ENCODE measurements at regions of chrX and their contacts with region 1.

Region 1: GRCh38 chrX:72271091-72271490 is 6.0 kb downstream of the RPS4X start:
- DNase-seq: no peak
- ATAC-seq: no peak
- H3K4me3 ChIP-seq: no peak overlapping the region
- H3K27ac ChIP-seq: no peak overlapping the region
- H3K4me1 ChIP-seq: peaks cover 38% of the 10 kb centered on the region
- H3K27me3 ChIP-seq: no peaks in the 10 kb centered on the region
- CTCF ChIP-seq: no peak

Region 2: GRCh38 chrX:72216973-72217372 is 54.1 kb before region 1 on chrX:
- CTCF ChIA-PET with region 1: no interaction called
- POLR2A ChIA-PET with region 1: no interaction called
- in situ Hi-C with region 1: no loop called
- intact Hi-C with region 1: no loop called
- DNase-seq: no peak
- ATAC-seq: no peak
- H3K4me3 ChIP-seq: no peak overlapping the region
- H3K27ac ChIP-seq: no peak overlapping the region
- H3K4me1 ChIP-seq: no peaks in the 10 kb centered on the region
- H3K27me3 ChIP-seq: no peaks in the 10 kb centered on the region
- CTCF ChIP-seq: no peak

Region 3: GRCh38 chrX:72294497-72294896 is 23.4 kb after region 1 on chrX:
- CTCF ChIA-PET with region 1: no interaction called
- POLR2A ChIA-PET with region 1: no interaction called
- in situ Hi-C with region 1: no loop called
- intact Hi-C with region 1: no loop called
- DNase-seq: no peak
- ATAC-seq: no peak
- H3K4me3 ChIP-seq: no peak overlapping the region
- H3K27ac ChIP-seq: no peak overlapping the region
- H3K4me1 ChIP-seq: no peaks in the 10 kb centered on the region
- H3K27me3 ChIP-seq: no peaks in the 10 kb centered on the region
- CTCF ChIP-seq: peak; percentile 14; the same call in 1 of the 2 replicates

Region 4: DNA sequence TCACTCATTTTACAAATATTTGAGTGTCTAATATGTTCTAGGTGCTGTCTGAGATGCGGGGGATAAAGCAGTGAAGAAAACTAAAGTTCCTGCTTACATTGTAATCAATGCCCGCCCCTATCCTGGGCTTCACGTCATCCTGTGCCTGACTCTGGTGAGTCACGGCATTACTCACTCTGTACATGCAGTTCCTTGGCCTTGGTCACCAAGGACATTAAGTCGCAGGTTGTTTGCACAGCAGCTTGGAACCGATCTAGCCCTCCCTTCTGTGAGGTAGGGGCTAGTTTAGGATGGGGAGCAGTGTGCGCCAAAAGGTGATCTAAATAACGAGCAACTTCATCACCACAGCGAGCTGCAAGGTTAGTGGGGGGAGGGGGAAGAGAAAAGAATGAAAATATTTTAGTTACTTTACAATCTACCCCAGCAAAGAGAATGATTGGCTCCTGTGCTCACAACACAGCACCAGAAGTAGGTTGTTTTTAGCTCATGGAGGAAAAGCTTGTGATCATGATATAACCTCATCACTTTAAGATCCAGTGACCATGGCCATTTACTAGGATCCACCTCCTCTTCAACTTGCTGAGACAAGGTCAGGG is 349.6 kb after region 1 on chrX:
- CTCF ChIA-PET with region 1: no interaction called
- POLR2A ChIA-PET with region 1: interaction called, 20 read pairs
- in situ Hi-C with region 1: no loop called
- intact Hi-C with region 1: no loop called
- DNase-seq: peak; percentile 90
- ATAC-seq: peak; percentile 96
- H3K4me3 ChIP-seq: peak overlapping the region in 1 of 2 experiments; percentile 32; a peak in 2 of 4 replicates
- H3K27ac ChIP-seq: peak overlapping the region; percentile 80
- H3K4me1 ChIP-seq: peaks cover 30% of the 10 kb centered on the region
- H3K27me3 ChIP-seq: no peaks in the 10 kb centered on the region
- CTCF ChIP-seq: no peak

Measured in Panc1 (cell line).